ENCODE measurements at regions of chr3 and their contacts with region 1.

Region 1: GRCh38 chr3:20340324-20340928 is 154.4 kb upstream of the SGO1 start:
- DNase-seq: peak; percentile 73
- H3K4me3 ChIP-seq: peak overlapping the region; percentile 52; the same call in 1 of the 2 replicates
- H3K27ac ChIP-seq: no peak overlapping the region
- H3K4me1 ChIP-seq: no peaks in the 10 kb centered on the region
- H3K27me3 ChIP-seq: no peaks in the 10 kb centered on the region

Region 2: DNA sequence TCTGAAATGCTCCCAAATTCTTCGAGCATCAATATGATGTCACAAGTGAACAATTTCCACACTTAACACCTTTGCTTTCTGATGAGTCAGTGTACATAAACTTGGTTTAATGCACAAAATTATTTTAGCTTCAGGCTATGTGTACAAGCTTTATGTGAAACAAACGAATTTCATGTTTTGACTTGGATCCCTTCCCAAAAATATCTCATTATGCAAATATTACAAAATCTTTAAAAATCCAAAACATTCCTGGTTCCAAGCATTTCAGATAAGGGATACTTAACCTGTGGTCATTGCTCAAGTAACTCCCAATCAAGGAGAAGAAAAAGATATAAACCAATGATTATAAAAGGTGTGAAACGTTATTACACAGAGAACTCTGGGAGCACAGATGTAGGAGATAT is 368.4 kb before region 1 on chr3:
- in situ Hi-C with region 1: no loop called
- DNase-seq: peak; percentile 46
- H3K4me3 ChIP-seq: no peak overlapping the region
- H3K27ac ChIP-seq: no peak overlapping the region; the same call in 1 of the 2 replicates
- H3K4me1 ChIP-seq: peaks cover 17% of the 10 kb centered on the region
- H3K27me3 ChIP-seq: no peaks in the 10 kb centered on the region

Region 3: GRCh38 chr3:20736287-20736852 is 395.9 kb after region 1 on chr3:
- in situ Hi-C with region 1: no loop called
- DNase-seq: no peak
- H3K4me3 ChIP-seq: no peak overlapping the region
- H3K27ac ChIP-seq: no peak overlapping the region
- H3K4me1 ChIP-seq: no peaks in the 10 kb centered on the region
- H3K27me3 ChIP-seq: no peaks in the 10 kb centered on the region

Region 4: DNA sequence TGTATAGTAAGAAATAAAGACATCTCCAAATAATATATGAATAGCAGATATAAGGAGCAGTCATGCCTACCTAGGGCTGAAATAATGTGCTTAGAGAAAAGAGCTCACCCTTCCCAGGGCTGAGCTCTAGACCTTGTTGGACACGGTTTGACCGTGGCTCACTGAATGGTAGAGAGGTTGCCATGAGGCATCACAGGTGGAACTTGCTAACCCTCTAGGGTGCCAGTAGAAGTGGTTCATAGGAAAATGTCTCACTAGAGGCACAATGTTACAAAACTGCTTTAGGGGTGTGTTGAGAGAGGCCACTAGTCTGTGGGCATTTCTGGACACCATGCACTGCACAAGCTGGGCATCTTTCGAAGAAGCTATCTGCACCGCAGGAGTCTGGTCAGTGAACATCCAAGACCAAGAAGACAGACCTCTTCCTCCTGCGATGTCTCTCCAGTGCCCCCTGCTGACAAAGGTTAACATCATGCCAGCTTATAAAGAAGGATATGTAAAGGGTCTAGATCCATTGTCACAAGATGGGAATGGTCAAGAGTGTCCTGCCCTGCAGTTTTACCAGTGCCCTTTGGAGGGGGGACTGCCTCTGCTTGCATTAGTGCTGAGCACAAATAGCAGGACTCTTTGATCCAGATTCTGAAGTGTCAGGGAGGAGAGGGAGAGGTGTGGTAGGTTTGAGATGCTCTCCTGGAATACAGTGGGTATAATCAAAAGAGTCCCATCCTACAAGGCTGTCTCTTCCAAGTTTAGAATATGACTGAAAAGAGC is 1143.8 kb after region 1 on chr3:
- in situ Hi-C with region 1: loop called (anchors 25 kb)
- DNase-seq: peak; percentile 78
- H3K4me3 ChIP-seq: no peak overlapping the region
- H3K27ac ChIP-seq: no peak overlapping the region
- H3K4me1 ChIP-seq: no peaks in the 10 kb centered on the region
- H3K27me3 ChIP-seq: no peaks in the 10 kb centered on the region

Region 5: GRCh38 chr3:21894459-21895340 is 1554.3 kb after region 1 on chr3:
- in situ Hi-C with region 1: loop called (anchors 25 kb)
- DNase-seq: peak; percentile 64
- H3K4me3 ChIP-seq: no peak overlapping the region
- H3K27ac ChIP-seq: no peak overlapping the region
- H3K4me1 ChIP-seq: 0 out of 2 replicates have a peak, but pooled peaks cover 3% of the 10 kb centered on the region
- H3K27me3 ChIP-seq: no peaks in the 10 kb centered on the region

Measured in GM23248 (cell line).